CD8-positive, alpha-beta T cell (primary cell): ENCODE measurements at regions of chr1 and their contacts with region 1.

Region 1: DNA sequence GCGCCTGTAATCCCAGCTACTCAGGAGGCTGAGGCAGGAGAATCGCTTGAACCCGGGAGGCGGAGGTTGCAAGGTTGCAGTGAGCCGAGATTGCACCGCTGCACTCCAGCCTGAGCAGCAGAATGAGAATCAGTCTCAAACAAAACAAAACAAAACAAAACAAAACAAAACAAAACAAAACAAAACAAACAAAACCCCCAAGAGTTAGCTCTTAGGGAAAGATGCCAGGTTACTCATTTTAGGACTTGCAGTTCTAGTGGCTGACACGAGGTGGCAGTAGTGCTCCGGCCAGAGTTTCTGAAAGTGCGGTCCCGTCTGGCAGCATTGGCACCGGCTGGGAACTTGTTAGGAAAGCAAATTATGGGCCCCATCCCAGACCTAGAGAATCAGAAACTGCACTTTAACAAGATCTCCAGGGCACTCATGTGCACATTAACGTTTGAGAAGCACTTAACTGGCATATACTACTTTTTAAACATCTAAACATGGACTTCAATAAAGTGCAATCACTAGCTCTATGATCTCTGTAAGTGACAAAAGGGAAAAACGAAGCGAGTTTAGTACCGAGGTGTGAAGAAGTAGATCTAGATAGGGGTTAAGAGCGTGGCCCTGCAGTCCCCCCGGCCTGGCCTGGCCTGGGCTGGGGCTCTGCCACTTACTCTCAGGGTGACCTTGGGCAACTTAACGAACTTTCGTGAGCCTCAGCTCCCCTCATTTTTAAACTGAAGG is 41.9 kb upstream of the TNFRSF1B start:
- DNase-seq: peak; percentile 69 to 91 (median 80)
- ATAC-seq: peak; percentile 84
- H3K4me3 ChIP-seq: no peak overlapping the region
- H3K4me3 Mint-ChIP-seq: no peak overlapping the region
- H3K27ac ChIP-seq: no peak overlapping the region
- H3K27ac Mint-ChIP-seq: no peak overlapping the region
- H3K4me1 ChIP-seq: peaks cover 27% of the 10 kb centered on the region
- H3K4me1 Mint-ChIP-seq: peaks cover 29% of the 10 kb centered on the region
- H3K27me3 ChIP-seq: no peaks in the 10 kb centered on the region
- H3K27me3 Mint-ChIP-seq: no peaks in the 10 kb centered on the region
- CTCF ChIP-seq: peak; percentile 97

Region 2: DNA sequence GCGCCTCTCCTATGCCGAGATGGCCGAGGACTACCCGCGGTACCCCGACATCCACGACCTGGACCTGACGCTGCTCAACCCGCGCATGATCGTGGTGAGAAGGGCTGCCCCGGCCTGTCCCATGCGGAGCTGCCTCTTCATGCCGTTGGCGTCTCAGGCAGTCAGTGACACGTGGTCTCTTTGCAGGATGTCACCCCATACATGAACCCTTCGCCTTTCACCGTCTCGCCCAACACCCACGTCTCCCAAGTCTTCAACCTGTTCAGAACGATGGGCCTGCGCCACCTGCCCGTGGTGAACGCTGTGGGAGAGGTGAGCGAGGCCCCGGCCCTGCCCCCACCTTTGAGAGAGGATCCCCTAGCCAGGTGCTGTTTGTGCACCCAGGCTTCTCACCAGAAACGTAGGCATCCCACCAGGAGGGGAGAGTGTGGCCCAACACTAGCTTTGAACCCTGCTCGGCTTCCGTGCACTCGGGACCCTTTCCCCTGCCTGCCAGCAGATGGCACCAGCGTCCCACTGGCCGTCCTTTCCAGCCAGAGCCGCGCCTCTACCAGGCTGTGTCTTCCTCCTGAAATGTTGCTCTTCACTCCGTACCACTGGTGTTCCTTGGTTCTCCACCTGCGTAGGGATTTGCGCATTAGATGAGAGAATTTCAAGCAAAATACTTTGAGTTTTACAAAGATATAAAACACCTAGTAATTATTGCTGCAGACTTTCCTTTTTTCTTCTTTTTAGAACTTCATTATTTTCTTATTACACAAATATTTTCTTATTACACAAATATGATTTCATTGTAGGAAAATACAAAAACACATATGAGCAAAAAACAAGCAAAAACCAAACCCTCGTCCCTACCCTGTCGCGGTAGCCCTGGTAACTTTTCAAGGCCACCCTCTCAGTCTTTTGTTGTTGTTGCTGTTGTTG is 286.2 kb before region 1 on chr1:
- CTCF ChIA-PET with region 1: interaction called, 3 read pairs
- POLR2A ChIA-PET with region 1: no interaction called
- intact Hi-C with region 1: loop called in 1 of 2 experiments (anchors 10 kb)
- DNase-seq: peak; percentile 50 to 84 (median 76)
- ATAC-seq: peak; percentile 98
- H3K4me3 ChIP-seq: no peak overlapping the region
- H3K4me3 Mint-ChIP-seq: no peak overlapping the region
- H3K27ac ChIP-seq: no peak overlapping the region
- H3K27ac Mint-ChIP-seq: no peak overlapping the region
- H3K4me1 ChIP-seq: no peaks in the 10 kb centered on the region
- H3K4me1 Mint-ChIP-seq: peaks cover 5% of the 10 kb centered on the region
- H3K27me3 ChIP-seq: no peaks in the 10 kb centered on the region
- H3K27me3 Mint-ChIP-seq: no peaks in the 10 kb centered on the region
- CTCF ChIP-seq: peak; percentile 96

Region 3: DNA sequence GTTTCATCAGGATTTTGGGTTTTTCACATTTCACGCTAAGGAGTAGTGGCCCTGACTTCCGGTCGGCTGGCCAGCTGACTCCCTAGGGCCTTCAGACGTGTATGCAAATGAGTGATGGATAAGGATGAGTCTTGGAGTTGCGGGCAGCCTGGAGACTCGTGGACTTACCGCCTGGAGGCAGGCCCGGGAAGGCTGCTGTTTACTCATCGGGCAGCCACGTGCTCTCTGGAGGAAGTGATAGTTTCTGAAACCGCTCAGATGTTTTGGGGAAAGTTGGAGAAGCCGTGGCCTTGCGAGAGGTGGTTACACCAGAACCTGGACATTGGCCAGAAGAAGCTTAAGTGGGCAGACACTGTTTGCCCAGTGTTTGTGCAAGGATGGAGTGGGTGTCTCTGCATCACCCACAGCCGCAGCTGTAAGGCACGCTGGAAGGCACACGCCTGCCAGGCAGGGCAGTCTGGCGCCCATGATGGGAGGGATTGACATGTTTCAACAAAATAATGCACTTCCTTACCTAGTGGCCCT is 18.8 kb after region 1 on chr1:
- CTCF ChIA-PET with region 1: interaction called, 97 read pairs
- POLR2A ChIA-PET with region 1: no interaction called
- intact Hi-C with region 1: no loop called
- DNase-seq: peak in 2 of 9 experiments; percentile 32 to 61
- ATAC-seq: peak; percentile 34
- H3K4me3 ChIP-seq: no peak overlapping the region
- H3K4me3 Mint-ChIP-seq: peak overlapping the region; percentile 23
- H3K27ac ChIP-seq: no peak overlapping the region
- H3K27ac Mint-ChIP-seq: peak overlapping the region; percentile 60
- H3K4me1 ChIP-seq: peaks cover 33% of the 10 kb centered on the region
- H3K4me1 Mint-ChIP-seq: peaks cover 40% of the 10 kb centered on the region
- H3K27me3 ChIP-seq: no peaks in the 10 kb centered on the region
- H3K27me3 Mint-ChIP-seq: no peaks in the 10 kb centered on the region
- CTCF ChIP-seq: no peak

Region 4: GRCh38 chr1:12166834-12167492 is 42.1 kb after region 1 on chr1 and contains the start of gene TNFRSF1B:
- CTCF ChIA-PET with region 1: interaction called, 155 read pairs
- POLR2A ChIA-PET with region 1: no interaction called
- intact Hi-C with region 1: loop called in 1 of 2 experiments (anchors 5 kb)
- DNase-seq: peak in 8 of 9 experiments; percentile 50 to 83 (median 68)
- ATAC-seq: peak; percentile 58
- H3K4me3 ChIP-seq: peak within 1 kb of the TSS; percentile 68 to 76
- H3K4me3 Mint-ChIP-seq: peak within 1 kb of the TSS; percentile 99
- H3K27ac ChIP-seq: peak within 1 kb of the TSS; percentile 61 to 83
- H3K27ac Mint-ChIP-seq: peak within 1 kb of the TSS; percentile 98
- H3K4me1 ChIP-seq: peaks cover 43% of the 10 kb centered on the region
- H3K4me1 Mint-ChIP-seq: peaks cover 60% of the 10 kb centered on the region
- H3K27me3 ChIP-seq: no peaks in the 10 kb centered on the region
- H3K27me3 Mint-ChIP-seq: no peaks in the 10 kb centered on the region
- CTCF ChIP-seq: no peak
- total RNA-seq, gene TNFRSF1B: 82.6 to 100 TPM

Region 5: DNA sequence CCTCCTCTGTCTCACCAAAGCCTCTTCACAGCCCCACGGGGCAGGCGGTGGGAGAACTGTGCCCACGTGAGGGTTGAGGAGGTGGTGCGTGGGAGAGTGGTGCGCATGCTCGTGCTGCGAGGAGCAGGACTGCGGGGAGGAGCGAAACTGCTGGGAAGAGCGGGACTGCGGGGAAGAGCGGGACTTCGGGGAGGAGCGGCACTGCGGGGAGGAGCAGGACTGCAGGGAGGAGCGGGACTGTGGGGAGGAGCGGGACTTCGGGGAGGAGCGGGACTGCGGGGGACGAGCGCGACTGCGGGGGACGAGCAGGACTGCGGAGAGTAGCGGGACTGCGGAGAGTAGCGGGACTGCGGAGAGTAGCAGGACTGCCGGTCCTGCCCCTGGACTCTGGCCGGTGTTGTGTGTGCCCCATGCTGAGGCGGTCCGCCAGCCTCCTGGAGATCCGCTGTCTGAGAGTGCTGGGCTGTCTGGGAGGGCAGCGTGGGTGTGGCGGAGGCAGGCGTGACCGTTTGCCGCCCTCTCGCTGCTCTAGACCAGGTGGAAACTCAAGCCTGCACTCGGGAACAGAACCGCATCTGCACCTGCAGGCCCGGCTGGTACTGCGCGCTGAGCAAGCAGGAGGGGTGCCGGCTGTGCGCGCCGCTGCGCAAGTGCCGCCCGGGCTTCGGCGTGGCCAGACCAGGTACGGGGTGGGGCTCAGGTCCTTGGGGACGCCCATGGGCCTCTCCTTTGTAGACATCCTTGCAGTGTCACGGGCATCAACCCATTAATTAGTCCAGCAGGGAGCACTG is 66.6 kb after region 1 on chr1:
- CTCF ChIA-PET with region 1: interaction called, 674 read pairs
- POLR2A ChIA-PET with region 1: interaction called, 4 read pairs
- intact Hi-C with region 1: no loop called
- DNase-seq: no peak
- ATAC-seq: peak; percentile 14
- H3K4me3 ChIP-seq: no peak overlapping the region
- H3K4me3 Mint-ChIP-seq: no peak overlapping the region
- H3K27ac ChIP-seq: no peak overlapping the region
- H3K27ac Mint-ChIP-seq: peak overlapping the region; percentile 45
- H3K4me1 ChIP-seq: peaks cover 4% of the 10 kb centered on the region
- H3K4me1 Mint-ChIP-seq: peaks cover 13% of the 10 kb centered on the region
- H3K27me3 ChIP-seq: no peaks in the 10 kb centered on the region
- H3K27me3 Mint-ChIP-seq: no peaks in the 10 kb centered on the region
- CTCF ChIP-seq: no peak

Region 6: GRCh38 chr1:12244078-12244477 is 119.2 kb after region 1 on chr1:
- CTCF ChIA-PET with region 1: interaction called, 23 read pairs
- POLR2A ChIA-PET with region 1: no interaction called
- intact Hi-C with region 1: no loop called
- DNase-seq: peak in 3 of 9 experiments; percentile 7 to 37 (median 30)
- ATAC-seq: no peak
- H3K4me3 ChIP-seq: no peak overlapping the region
- H3K4me3 Mint-ChIP-seq: no peak overlapping the region
- H3K27ac ChIP-seq: no peak overlapping the region
- H3K27ac Mint-ChIP-seq: no peak overlapping the region
- H3K4me1 ChIP-seq: no peaks in the 10 kb centered on the region
- H3K4me1 Mint-ChIP-seq: peaks cover 5% of the 10 kb centered on the region
- H3K27me3 ChIP-seq: no peaks in the 10 kb centered on the region
- H3K27me3 Mint-ChIP-seq: no peaks in the 10 kb centered on the region
- CTCF ChIP-seq: peak; percentile 21